AG04449 (cell line): ENCODE measurements at regions of chr17 and their contacts with region 1.

Region 1: GRCh38 chr17:63406689-63407330 is 39.3 kb downstream of the CYB561 start:
- DNase-seq: peak; percentile 62
- H3K4me3 ChIP-seq: no peak overlapping the region
- CTCF ChIP-seq: peak; percentile 81

Region 2: DNA sequence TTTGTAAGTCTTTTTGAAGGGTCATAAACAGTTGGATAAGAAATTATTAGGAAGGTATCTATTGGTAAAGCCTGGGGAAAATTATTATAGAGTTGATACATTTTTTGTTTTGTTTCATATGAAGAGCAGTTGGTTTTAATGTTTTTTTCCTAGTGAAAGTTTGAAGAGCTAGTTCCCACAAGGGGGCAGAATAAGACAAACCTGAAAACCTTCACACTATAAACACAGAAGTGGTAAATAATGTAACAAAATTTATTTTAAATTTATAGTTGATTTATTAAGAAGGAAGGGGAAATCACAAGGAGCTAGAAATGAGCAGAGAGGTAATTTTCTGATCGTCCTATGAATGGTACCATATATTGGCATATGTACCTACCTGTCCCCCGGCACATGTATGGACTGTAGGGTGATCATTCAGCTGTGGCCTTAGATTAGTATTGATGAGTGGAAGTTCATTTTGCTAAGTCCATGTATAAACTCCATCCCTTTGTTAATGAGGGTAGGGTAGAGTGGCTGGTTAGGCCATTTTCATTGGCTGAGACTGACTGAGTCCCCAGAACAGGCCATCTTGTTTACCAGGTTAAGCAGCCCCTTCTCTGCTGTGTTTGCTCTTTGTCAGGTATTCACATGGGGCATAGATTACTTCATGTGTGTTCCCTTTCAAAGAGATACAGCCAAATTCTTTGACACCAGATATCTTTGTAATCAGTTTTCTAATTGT is 324.4 kb before region 1 on chr17:
- CTCF ChIA-PET with region 1: interaction called, 100 read pairs
- POLR2A ChIA-PET with region 1: no interaction called
- DNase-seq: no peak
- H3K4me3 ChIP-seq: no peak overlapping the region
- CTCF ChIP-seq: no peak

Region 3: DNA sequence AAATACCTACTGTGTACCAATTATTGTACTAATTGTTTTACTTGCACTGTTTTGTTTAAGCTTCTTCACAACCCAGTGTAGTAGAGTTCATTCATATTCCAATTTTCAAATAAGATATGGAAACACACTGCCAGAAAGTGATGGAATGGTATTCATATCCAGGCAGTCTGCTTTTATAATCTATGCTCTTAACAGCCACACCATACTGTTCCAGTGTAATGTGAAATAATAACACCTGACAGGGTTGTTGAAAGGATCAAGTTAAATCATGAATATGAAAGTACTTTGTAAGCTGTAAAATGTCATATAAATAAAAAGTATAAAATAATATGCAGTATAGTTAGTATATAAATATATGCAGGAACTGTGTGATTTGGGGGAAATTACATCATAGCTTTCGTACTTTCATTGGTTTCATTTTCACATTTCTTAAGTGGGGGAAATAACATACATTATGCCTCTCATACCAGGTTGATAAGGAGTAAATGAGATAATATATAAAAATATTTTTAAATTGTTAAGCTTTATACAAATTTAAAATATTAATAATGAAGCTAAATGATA is 210.0 kb before region 1 on chr17:
- CTCF ChIA-PET with region 1: interaction called, 11 read pairs
- POLR2A ChIA-PET with region 1: interaction called, 3 read pairs
- DNase-seq: no peak
- H3K4me3 ChIP-seq: no peak overlapping the region
- CTCF ChIP-seq: no peak

Region 4: DNA sequence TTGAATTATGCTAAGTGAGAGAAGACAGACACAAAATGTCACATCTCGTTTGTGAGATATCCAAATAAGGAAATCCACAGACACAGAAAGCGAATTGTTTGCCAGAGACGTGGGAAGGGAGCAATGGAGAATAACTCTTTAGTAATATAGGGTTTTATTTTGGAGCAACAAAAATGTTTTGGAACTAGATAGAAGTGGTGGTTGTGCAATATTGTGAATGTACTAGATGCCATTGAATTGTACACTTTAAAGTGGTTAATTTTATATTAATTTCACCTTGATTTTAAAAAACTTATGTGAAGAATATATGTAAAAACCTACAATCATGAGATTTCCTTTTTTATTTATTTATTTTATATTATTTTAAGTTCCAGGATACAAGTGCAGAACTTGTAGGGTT is 108.4 kb before region 1 on chr17:
- CTCF ChIA-PET with region 1: no interaction called
- POLR2A ChIA-PET with region 1: no interaction called
- DNase-seq: no peak
- H3K4me3 ChIP-seq: no peak overlapping the region
- CTCF ChIP-seq: no peak

Region 5: DNA sequence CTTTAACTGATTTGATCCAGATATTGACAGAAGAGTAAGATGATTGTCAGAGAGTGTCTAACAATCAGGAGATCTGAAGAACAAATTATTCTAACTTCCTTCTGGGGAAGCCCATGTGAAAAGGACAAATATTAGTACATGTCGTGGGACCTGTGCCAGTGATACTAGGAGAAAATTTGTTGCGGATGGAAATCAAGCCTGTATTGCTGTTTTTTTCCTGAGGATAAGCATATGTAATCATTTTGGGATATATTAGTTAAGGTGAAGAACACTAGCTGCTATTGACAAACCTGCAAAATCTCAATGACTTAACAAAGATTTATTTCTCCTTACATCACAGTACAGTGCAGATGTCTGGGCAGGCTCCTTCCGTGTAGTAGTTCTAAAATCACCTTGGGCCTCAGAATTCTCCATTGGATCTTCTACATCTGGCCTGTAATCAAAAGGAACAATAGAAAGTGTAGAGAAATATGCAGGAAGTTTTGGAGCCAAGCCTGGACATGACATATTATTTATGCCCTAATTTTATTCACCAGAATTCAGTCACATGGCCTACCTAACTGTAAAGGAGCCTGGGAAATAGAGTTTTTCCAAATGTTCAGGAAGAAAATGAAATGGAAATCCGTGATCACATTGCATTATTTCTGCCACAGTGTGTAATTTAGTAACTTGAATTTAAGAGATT is 19.0 kb before region 1 on chr17:
- CTCF ChIA-PET with region 1: interaction called, 16 read pairs
- POLR2A ChIA-PET with region 1: no interaction called
- DNase-seq: no peak
- H3K4me3 ChIP-seq: no peak overlapping the region
- CTCF ChIP-seq: no peak

Region 6: GRCh38 chr17:63425482-63425881 is 18.7 kb after region 1 on chr17:
- CTCF ChIA-PET with region 1: interaction called, 15 read pairs
- POLR2A ChIA-PET with region 1: no interaction called
- DNase-seq: no peak
- H3K4me3 ChIP-seq: no peak overlapping the region
- CTCF ChIP-seq: peak; percentile 77